B cell (primary cell): ENCODE measurements at regions of chr2 and their contacts with region 1.

Region 1: GRCh38 chr2:47767880-47768609 is 14.9 kb upstream of the MSH6 start:
- DNase-seq: peak; percentile 80
- ATAC-seq: peak; percentile 96
- H3K4me3 ChIP-seq: peak overlapping the region in 1 of 5 experiments; percentile 32
- H3K4me3 Mint-ChIP-seq: peak overlapping the region; percentile 46
- H3K27ac ChIP-seq: no peak overlapping the region
- H3K27ac Mint-ChIP-seq: peak overlapping the region; percentile 18
- H3K4me1 ChIP-seq: peaks cover 4 to 9% of the 10 kb centered on the region in 2 donors
- H3K4me1 Mint-ChIP-seq: peaks cover 6% of the 10 kb centered on the region
- H3K27me3 ChIP-seq: peaks cover 0 to 5% (median 0%) of the 10 kb centered on the region in 4 experiments
- H3K27me3 Mint-ChIP-seq: no peaks in the 10 kb centered on the region
- CTCF ChIP-seq: peak; percentile 98

Region 2: DNA sequence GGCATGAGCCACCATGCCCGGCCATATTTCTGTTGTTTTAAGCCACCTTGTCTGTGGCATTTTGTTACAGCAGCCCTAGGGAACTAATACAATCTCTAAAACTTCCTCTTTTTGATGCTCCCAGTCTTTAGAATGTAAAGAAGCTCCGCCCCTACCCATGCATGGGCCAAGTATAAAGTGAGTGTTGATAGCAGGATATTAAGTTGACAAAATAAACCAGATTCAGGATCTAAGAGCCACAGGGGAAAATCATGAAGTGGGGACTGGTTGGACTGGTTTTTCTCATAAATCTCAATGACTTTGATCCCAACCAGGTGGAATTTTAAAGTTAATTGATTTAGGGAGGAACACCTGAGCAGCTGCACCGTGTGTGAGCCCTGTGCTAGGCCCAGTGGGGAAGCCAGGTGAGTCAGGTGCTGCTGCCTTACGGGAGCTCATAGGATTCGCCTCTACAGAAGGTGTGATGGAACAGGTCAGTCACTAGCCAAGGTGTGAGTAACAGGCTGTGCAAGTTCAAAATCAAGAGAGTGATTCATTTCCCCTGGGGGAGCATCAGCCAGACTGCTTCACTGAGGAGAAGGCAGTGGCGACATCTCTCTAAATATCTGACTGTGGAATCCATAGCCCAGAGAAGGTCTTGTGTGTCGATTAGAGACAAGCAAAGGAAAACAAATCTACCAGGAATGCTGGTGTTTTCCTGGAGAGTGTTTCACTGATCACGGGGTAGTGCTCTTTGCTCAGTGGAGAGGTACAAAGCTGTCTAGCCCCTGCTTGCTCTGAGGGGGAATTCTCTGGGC is 428.1 kb before region 1 on chr2:
- CTCF ChIA-PET with region 1: interaction called, 133 read pairs
- POLR2A ChIA-PET with region 1: no interaction called
- intact Hi-C with region 1: no loop called
- DNase-seq: no peak
- ATAC-seq: no peak
- H3K4me3 ChIP-seq: no peak overlapping the region
- H3K4me3 Mint-ChIP-seq: no peak overlapping the region
- H3K27ac ChIP-seq: no peak overlapping the region
- H3K27ac Mint-ChIP-seq: no peak overlapping the region
- H3K4me1 ChIP-seq: peaks cover 21 to 26% of the 10 kb centered on the region in 2 donors
- H3K4me1 Mint-ChIP-seq: peaks cover 30% of the 10 kb centered on the region
- H3K27me3 ChIP-seq: peaks cover 0 to 7% (median 1%) of the 10 kb centered on the region in 4 experiments
- H3K27me3 Mint-ChIP-seq: peaks cover 8% of the 10 kb centered on the region
- CTCF ChIP-seq: no peak

Region 3: GRCh38 chr2:47422560-47422959 is 345.5 kb before region 1 on chr2:
- CTCF ChIA-PET with region 1: no interaction called
- POLR2A ChIA-PET with region 1: no interaction called
- intact Hi-C with region 1: no loop called
- DNase-seq: no peak
- ATAC-seq: no peak
- H3K4me3 ChIP-seq: no peak overlapping the region
- H3K4me3 Mint-ChIP-seq: no peak overlapping the region
- H3K27ac ChIP-seq: no peak overlapping the region
- H3K27ac Mint-ChIP-seq: no peak overlapping the region
- H3K4me1 ChIP-seq: no peaks in the 10 kb centered on the region
- H3K4me1 Mint-ChIP-seq: no peaks in the 10 kb centered on the region
- H3K27me3 ChIP-seq: no peaks in the 10 kb centered on the region
- H3K27me3 Mint-ChIP-seq: no peaks in the 10 kb centered on the region
- CTCF ChIP-seq: no peak

Region 4: GRCh38 chr2:47437287-47437686 is 330.8 kb before region 1 on chr2:
- CTCF ChIA-PET with region 1: interaction called, 170 read pairs
- POLR2A ChIA-PET with region 1: interaction called, 3 read pairs
- intact Hi-C with region 1: loop called (anchors 1 kb)
- DNase-seq: peak; percentile 44
- ATAC-seq: no peak
- H3K4me3 ChIP-seq: no peak overlapping the region
- H3K4me3 Mint-ChIP-seq: no peak overlapping the region
- H3K27ac ChIP-seq: no peak overlapping the region
- H3K27ac Mint-ChIP-seq: no peak overlapping the region
- H3K4me1 ChIP-seq: no peaks in the 10 kb centered on the region
- H3K4me1 Mint-ChIP-seq: no peaks in the 10 kb centered on the region
- H3K27me3 ChIP-seq: no peaks in the 10 kb centered on the region
- H3K27me3 Mint-ChIP-seq: no peaks in the 10 kb centered on the region
- CTCF ChIP-seq: peak; percentile 72

Region 5: DNA sequence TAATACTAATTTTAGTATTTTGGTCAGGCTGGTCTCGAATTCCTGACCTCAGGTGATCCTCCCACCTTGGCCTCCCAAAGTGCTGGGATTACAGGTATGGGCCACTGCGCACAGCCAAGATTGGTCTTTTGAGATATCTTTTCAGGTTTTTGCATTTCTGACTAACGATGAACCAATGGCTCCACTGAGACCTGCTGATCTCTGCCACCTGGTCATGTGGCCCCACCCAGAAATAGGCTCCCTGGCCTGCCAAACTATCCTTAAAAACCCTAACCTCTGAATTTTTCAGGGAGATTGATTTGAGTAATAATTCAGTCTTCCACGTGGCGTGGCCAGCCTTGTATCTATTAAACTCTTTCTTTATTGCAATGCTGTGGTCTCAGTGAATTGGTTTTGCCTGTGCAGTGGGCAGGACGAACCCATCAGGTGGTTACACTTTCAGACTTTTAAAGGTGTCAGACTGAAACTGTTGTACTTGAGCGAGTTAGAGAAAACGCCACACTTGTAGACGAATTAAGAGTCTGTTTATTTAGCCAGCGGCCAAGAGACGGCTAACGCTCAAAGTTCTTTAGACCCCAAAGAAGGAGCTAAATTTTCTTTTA is 70.9 kb before region 1 on chr2:
- CTCF ChIA-PET with region 1: interaction called, 9 read pairs
- POLR2A ChIA-PET with region 1: no interaction called
- intact Hi-C with region 1: loop called (anchors 5 kb)
- DNase-seq: peak; percentile 55
- ATAC-seq: peak; percentile 34
- H3K4me3 ChIP-seq: no peak overlapping the region
- H3K4me3 Mint-ChIP-seq: peak overlapping the region; percentile 51
- H3K27ac ChIP-seq: peak overlapping the region; percentile 20 to 57
- H3K27ac Mint-ChIP-seq: peak overlapping the region; percentile 66
- H3K4me1 ChIP-seq: peaks cover 41 to 58% of the 10 kb centered on the region in 2 donors
- H3K4me1 Mint-ChIP-seq: peaks cover 65% of the 10 kb centered on the region
- H3K27me3 ChIP-seq: no peaks in the 10 kb centered on the region
- H3K27me3 Mint-ChIP-seq: no peaks in the 10 kb centered on the region
- CTCF ChIP-seq: no peak

Region 6: DNA sequence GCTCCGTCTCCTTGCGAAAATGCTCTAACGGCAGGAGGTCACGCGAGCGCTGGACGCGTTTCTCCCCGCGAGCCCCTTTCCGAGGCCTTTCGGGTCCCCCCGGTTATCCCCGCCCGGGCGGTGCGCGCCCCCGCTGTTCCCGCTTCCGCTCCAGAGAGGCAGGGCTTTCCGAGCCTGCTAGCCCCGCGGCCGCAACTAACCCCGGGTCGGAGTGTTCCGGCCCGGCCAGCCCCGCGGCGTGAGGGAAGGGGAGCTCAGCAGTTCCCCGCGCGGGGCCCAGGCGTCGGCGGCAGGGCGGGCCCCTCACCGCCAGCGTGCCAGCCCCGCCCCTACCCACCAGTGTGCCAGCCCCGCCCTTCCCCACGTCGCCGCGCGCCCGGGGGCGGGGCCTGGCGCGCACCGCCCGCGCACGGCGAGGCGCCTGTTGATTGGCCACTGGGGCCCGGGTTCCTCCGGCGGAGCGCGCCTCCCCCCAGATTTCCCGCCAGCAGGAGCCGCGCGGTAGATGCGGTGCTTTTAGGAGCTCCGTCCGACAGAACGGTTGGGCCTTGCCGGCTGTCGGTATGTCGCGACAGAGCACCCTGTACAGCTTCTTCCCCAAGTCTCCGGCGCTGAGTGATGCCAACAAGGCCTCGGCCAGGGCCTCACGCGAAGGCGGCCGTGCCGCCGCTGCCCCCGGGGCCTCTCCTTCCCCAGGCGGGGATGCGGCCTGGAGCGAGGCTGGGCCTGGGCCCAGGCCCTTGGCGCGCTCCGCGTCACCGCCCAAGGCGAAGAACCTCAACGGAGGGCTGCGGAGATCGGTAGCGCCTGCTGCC is 14.8 kb after region 1 on chr2 and contains the start of gene MSH6:
- CTCF ChIA-PET with region 1: interaction called, 25 read pairs
- POLR2A ChIA-PET with region 1: interaction called, 4 read pairs
- intact Hi-C with region 1: no loop called
- DNase-seq: peak; percentile 95
- ATAC-seq: peak; percentile 87
- H3K4me3 ChIP-seq: peak within 1 kb of the TSS; percentile 80 to 98 (median 94)
- H3K4me3 Mint-ChIP-seq: peak within 1 kb of the TSS; percentile 95
- H3K27ac ChIP-seq: peak within 1 kb of the TSS; percentile 74 to 85
- H3K27ac Mint-ChIP-seq: peak within 1 kb of the TSS; percentile 94
- H3K4me1 ChIP-seq: peaks cover 14 to 26% of the 10 kb centered on the region in 2 donors
- H3K4me1 Mint-ChIP-seq: peaks cover 18% of the 10 kb centered on the region
- H3K27me3 ChIP-seq: no peaks in the 10 kb centered on the region
- H3K27me3 Mint-ChIP-seq: no peaks in the 10 kb centered on the region
- CTCF ChIP-seq: no peak
- total RNA-seq, gene MSH6: 43.9 and 46.9 TPM in 2 replicates